Mammary epithelial cell (primary cell): ENCODE measurements at regions of chr12 and their contacts with region 1.

Region 1: DNA sequence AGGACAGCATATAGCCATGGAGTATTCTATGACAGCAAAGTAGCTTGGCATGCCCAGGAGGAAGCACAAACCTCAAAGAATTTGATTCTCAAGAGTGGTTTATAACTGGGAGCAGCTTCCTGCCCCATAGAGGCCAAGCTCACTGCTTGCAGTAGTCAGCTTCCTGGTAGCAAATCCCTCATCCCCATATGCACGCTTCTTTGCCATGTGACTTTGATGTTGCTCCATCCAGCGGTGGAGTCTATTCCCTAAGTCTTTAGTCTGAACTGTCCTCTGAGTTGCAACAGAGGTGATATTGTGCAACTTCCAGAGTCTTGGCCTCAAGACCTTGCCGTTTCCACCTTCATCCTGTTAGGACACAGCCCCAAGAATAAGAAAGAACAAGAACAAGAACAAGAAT is 996.8 kb upstream of the TMEM132C start:
- DNase-seq: peak; percentile 68
- H3K4me3 ChIP-seq: no peak overlapping the region
- H3K27ac ChIP-seq: peak overlapping the region; percentile 53
- H3K4me1 ChIP-seq: peaks cover 45% of the 10 kb centered on the region
- H3K27me3 ChIP-seq: no peaks in the 10 kb centered on the region
- CTCF ChIP-seq: no peak

Region 2: GRCh38 chr12:127145929-127146789 is 124.0 kb before region 1 on chr12:
- CTCF ChIA-PET with region 1: no interaction called
- dilution Hi-C with region 1: no loop called
- in situ Hi-C with region 1: no loop called
- intact Hi-C with region 1: loop called (anchors 5 kb)
- DNase-seq: peak; percentile 46
- H3K4me3 ChIP-seq: peak overlapping the region; percentile 6 to 73 (median 55)
- H3K27ac ChIP-seq: peak overlapping the region; percentile 35
- H3K4me1 ChIP-seq: peaks cover 12% of the 10 kb centered on the region
- H3K27me3 ChIP-seq: no peaks in the 10 kb centered on the region
- CTCF ChIP-seq: peak in 1 of 2 donors; percentile 25

Region 3: GRCh38 chr12:127191129-127191528 is 79.1 kb before region 1 on chr12:
- CTCF ChIA-PET with region 1: no interaction called
- dilution Hi-C with region 1: no loop called
- in situ Hi-C with region 1: no loop called
- intact Hi-C with region 1: loop called (anchors 2 kb)
- DNase-seq: peak; percentile 77
- H3K4me3 ChIP-seq: no peak overlapping the region
- H3K27ac ChIP-seq: no peak overlapping the region
- H3K4me1 ChIP-seq: peaks cover 29% of the 10 kb centered on the region
- H3K27me3 ChIP-seq: no peaks in the 10 kb centered on the region
- CTCF ChIP-seq: no peak

Region 4: GRCh38 chr12:127230843-127231260 is 39.3 kb before region 1 on chr12:
- CTCF ChIA-PET with region 1: no interaction called
- dilution Hi-C with region 1: no loop called
- in situ Hi-C with region 1: loop called in 1 of 2 experiments (anchors 5 kb)
- intact Hi-C with region 1: loop called (anchors 1 kb)
- DNase-seq: peak; percentile 99
- H3K4me3 ChIP-seq: no peak overlapping the region
- H3K27ac ChIP-seq: peak overlapping the region; percentile 88
- H3K4me1 ChIP-seq: peaks cover 35% of the 10 kb centered on the region
- H3K27me3 ChIP-seq: no peaks in the 10 kb centered on the region
- CTCF ChIP-seq: no peak

Region 5: DNA sequence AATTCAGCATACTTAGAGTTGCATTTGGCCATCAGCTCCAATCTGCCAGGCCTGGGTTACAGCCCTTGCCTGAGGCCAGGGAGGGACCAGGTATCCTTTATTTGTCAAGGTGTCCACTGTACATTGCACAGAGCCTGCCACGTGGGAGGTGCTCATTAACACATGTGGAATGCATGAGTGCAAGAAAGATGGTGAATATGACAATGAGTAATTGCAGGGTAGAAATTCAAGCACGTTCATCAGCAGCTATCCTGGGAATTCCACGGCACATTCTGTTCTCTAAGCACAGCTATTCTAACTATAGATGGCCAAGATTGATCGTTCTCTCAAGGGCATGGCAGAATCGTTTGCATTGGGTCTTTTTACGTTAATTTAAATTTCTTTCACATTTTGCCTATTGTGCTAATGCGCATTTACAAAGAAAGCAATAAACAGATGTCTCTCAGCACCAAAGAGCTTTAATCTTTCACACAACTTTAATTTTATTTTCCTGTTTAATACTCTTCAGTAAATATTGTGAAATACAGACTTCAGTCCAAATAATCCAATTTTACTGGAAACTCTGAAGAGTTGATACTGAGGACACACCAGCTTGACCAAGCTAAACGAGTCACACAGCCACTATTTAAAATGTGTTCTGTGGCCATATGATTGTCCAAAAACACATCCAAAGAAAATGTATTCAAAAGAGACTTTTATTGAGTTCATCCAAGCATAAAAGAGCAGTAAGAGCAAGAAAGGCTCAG is 28.9 kb before region 1 on chr12:
- CTCF ChIA-PET with region 1: no interaction called
- dilution Hi-C with region 1: no loop called
- in situ Hi-C with region 1: no loop called
- intact Hi-C with region 1: loop called (anchors 2 kb)
- DNase-seq: peak; percentile 90
- H3K4me3 ChIP-seq: no peak overlapping the region
- H3K27ac ChIP-seq: peak overlapping the region; percentile 76
- H3K4me1 ChIP-seq: peaks cover 45% of the 10 kb centered on the region
- H3K27me3 ChIP-seq: no peaks in the 10 kb centered on the region
- CTCF ChIP-seq: no peak

Region 6: DNA sequence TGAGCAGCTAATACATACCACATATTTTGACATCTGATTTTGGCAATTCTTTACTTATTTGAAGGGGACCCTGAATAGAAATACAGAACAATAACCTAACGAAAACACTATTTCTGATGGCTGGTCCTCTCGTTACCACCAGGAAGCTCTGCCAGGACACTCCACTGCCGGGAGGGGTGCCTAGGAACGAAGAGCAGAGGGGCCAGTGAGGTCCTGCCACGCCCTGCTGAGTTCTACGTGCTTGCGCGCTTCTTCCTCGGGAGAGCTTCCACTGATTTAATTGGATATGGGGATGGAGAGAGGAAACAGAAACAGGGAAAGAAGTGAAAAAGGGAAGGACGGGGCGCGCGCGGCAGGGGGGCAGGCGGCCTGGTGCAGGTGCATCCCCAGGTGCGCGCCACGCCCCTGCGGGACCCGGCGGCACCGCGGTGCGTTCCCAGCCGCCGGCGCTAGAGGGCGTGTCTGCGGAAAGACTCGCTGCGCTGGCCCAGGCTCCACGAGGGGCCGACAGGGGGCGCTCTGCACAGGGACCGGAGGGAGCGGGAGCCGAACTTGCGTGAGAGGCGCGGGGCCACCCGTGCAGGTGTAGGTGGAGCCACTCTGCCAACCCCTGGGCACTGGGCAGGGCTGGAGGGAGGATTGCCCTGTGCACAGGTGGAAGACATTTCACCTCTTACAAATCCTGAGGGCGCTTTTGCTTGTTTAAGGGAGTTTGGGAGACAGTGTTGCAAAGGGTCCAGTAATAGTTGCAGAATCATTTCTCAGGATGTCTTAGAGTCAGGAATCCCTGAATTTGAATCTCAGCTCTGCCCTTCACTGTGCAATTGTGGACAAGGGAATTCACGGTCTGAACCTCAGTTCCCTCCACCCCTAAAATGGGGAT is 10.4 kb after region 1 on chr12:
- CTCF ChIA-PET with region 1: no interaction called
- dilution Hi-C with region 1: no loop called
- in situ Hi-C with region 1: no loop called
- intact Hi-C with region 1: loop called (anchors 1 kb)
- DNase-seq: peak; percentile 39
- H3K4me3 ChIP-seq: no peak overlapping the region
- H3K27ac ChIP-seq: no peak overlapping the region
- H3K4me1 ChIP-seq: peaks cover 17% of the 10 kb centered on the region
- H3K27me3 ChIP-seq: no peaks in the 10 kb centered on the region
- CTCF ChIP-seq: peak; percentile 91 to 92